Activated T-helper 2 cell treated with anti-CD3 and anti-CD28 coated beads, Interferon-gamma antibody, Interleukin-2, Interleukin-4, amounts not matched to agents 10 μg/mL and 5 μg/mL and 100 μg/mL, durations not matched to agents 14 hours and 24 hours and 36 hours (primary cell): ENCODE measurements at regions of chr5 and their contacts with region 1.

Region 1: GRCh38 chr5:126676195-126676624 is 75.5 kb downstream of the PHAX start:
- DNase-seq: peak; percentile 57
- H3K4me3 Mint-ChIP-seq: no peak overlapping the region
- H3K27ac Mint-ChIP-seq: peak overlapping the region; percentile 8
- H3K4me1 Mint-ChIP-seq: peaks cover 19% of the 10 kb centered on the region
- H3K27me3 Mint-ChIP-seq: no peaks in the 10 kb centered on the region

Region 2: GRCh38 chr5:126801992-126802294 is 125.7 kb after region 1 on chr5:
- intact Hi-C with region 1: loop called (anchors 2 kb)
- DNase-seq: no peak
- H3K4me3 Mint-ChIP-seq: no peak overlapping the region
- H3K27ac Mint-ChIP-seq: no peak overlapping the region
- H3K4me1 Mint-ChIP-seq: peaks cover 39% of the 10 kb centered on the region
- H3K27me3 Mint-ChIP-seq: no peaks in the 10 kb centered on the region